ENCODE measurements at regions of chr19 and their contacts with region 1.

Region 1: GRCh38 chr19:47745010-47745901 is at the start of gene NOP53:
- DNase-seq: peak; percentile 83 to 98
- H3K4me3 ChIP-seq: peak within 1 kb of the TSS; percentile 67 to 79
- H3K27ac ChIP-seq: peak within 1 kb of the TSS; percentile 98 to 99
- H3K4me1 ChIP-seq: peaks cover 15 to 24% of the 10 kb centered on the region in 2 donors
- H3K27me3 ChIP-seq: no peaks in the 10 kb centered on the region
- CTCF ChIP-seq: no peak
- total RNA-seq, gene NOP53: 385 TPM

Region 2: DNA sequence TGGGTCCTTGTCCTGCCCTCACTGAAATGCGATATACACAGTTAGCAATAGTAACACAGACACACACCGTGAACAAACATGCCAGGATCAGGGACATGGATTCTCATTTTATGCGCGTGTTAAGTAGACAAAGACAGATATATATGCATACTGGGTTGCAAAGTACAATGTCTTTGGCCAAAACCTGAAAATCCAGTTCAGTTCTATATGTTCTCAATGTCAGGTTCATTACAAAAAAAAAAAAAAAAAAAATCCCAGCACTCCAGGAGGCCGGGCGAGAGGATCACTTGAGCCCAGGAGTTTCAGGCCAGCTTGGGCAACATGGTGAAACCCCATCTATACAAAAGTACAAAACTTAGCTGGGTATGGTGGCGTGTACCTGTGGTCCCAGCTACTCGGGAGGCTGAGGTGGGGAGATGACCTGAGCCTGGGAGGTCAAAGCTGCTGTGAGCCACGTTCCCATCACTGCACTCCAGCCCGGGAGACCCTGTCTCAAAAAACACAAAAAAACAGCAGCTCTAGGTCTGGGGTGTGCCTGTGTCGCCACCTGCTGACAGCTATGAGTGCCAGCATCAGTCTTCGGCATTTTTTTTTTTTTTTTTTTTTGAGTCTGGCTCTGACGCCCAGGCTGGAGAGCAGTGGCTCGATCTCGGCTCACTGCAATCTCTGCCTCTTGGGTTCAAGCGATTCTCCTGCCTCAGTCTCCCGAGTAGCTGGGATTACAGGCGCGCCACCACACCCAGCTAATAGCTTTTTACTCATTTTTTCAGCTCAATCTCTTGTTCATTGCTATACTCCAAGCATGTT is 904.9 kb before region 1 on chr19:
- intact Hi-C with region 1: no loop called
- DNase-seq: no peak
- H3K4me3 ChIP-seq: no peak overlapping the region
- H3K27ac ChIP-seq: peak overlapping the region; percentile 50 to 70
- H3K4me1 ChIP-seq: peaks cover 2 to 8% of the 10 kb centered on the region in 2 donors
- H3K27me3 ChIP-seq: no peaks in the 10 kb centered on the region
- CTCF ChIP-seq: peak; percentile 80 to 85 (median 82)

Region 3: GRCh38 chr19:47514869-47515588 is 230.2 kb before region 1 on chr19 and contains the start of gene NAPA:
- intact Hi-C with region 1: loop called (anchors 1 kb)
- DNase-seq: peak; percentile 100
- H3K4me3 ChIP-seq: peak within 1 kb of the TSS; percentile 84 to 85
- H3K27ac ChIP-seq: peak within 1 kb of the TSS; percentile 92 to 96
- H3K4me1 ChIP-seq: peaks cover 21 to 38% of the 10 kb centered on the region in 2 donors
- H3K27me3 ChIP-seq: no peaks in the 10 kb centered on the region
- CTCF ChIP-seq: no peak
- total RNA-seq, gene NAPA: 102 TPM

Region 4: GRCh38 chr19:47608074-47608918 is 137.0 kb before region 1 on chr19:
- intact Hi-C with region 1: loop called (anchors 1 kb)
- DNase-seq: peak; percentile 65 to 96
- H3K4me3 ChIP-seq: peak overlapping the region; percentile 84 to 97
- H3K27ac ChIP-seq: peak overlapping the region; percentile 94 to 97
- H3K4me1 ChIP-seq: peaks cover 9 to 38% of the 10 kb centered on the region in 2 donors
- H3K27me3 ChIP-seq: no peaks in the 10 kb centered on the region
- CTCF ChIP-seq: peak; percentile 22 to 55 (median 25)

Region 5: GRCh38 chr19:47713046-47714021 is 31.9 kb before region 1 on chr19 and contains the start of gene EHD2:
- intact Hi-C with region 1: loop called (anchors 1 kb)
- DNase-seq: peak in 1 of 2 donors; percentile 84
- H3K4me3 ChIP-seq: peak within 1 kb of the TSS; percentile 88 to 100
- H3K27ac ChIP-seq: peak within 1 kb of the TSS; percentile 87 to 98
- H3K4me1 ChIP-seq: peaks cover 3 to 42% of the 10 kb centered on the region in 2 donors
- H3K27me3 ChIP-seq: no peaks in the 10 kb centered on the region
- CTCF ChIP-seq: peak; percentile 97 to 98 (median 97)
- total RNA-seq, gene EHD2: 342 TPM

Region 6: GRCh38 chr19:47719047-47719859 is 26.0 kb before region 1 on chr19:
- intact Hi-C with region 1: loop called (anchors 1 kb)
- DNase-seq: peak; percentile 59 to 94
- H3K4me3 ChIP-seq: peak overlapping the region; percentile 10 to 61
- H3K27ac ChIP-seq: peak overlapping the region; percentile 90 to 98
- H3K4me1 ChIP-seq: peaks cover 14 to 71% of the 10 kb centered on the region in 2 donors
- H3K27me3 ChIP-seq: no peaks in the 10 kb centered on the region
- CTCF ChIP-seq: no peak

Region 7: GRCh38 chr19:47729992-47730889 is 15.0 kb before region 1 on chr19:
- intact Hi-C with region 1: loop called (anchors 1 kb)
- DNase-seq: peak in 1 of 2 donors; percentile 87
- H3K4me3 ChIP-seq: peak overlapping the region; percentile 43 to 54
- H3K27ac ChIP-seq: peak overlapping the region; percentile 89 to 95
- H3K4me1 ChIP-seq: peaks cover 6 to 26% of the 10 kb centered on the region in 2 donors
- H3K27me3 ChIP-seq: no peaks in the 10 kb centered on the region
- CTCF ChIP-seq: no peak

Region 8: DNA sequence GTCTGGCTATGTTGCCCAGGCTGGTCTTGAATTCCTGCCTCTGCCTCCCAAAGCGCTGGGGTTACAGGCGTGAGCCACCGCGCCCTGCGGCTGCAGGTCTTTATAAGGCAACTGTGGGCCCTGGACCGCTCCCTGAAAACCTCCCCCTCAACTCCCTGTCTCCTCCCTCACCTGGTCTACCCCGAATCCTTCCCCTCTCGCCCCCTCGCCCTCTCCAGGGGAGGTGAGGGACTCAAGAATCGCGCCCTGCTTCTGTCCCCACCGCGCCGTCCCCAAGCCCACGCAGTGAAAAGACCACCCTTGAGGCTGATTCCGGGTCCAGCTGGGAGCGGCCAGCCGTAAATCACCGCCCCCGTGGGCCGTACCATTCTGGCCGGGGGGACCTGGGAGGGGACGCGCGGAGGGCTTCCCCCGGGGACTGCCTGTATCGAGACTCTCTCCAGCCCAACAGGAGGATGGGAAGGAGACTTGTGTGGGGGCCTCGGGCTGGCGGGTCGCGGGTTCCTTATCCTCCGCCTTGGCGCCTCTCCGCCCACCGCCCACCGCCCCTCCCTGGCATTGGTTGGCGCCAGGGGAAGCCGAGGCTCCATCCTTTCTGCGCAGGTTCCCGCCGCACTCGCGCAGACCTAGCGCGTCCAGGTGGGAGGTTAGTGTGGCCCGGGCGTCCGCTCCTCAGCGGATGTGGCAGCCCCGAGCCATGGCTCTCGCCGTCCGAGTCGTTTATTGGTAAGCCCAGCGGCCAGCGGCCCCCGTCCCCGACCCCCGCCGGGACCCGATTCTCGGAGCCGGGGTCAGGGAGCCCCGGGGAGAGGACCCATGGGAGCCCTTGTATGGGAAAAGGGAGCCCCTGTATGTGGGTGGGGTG is 33.1 kb after region 1 on chr19 and contains the start of gene SELENOW:
- intact Hi-C with region 1: loop called (anchors 2 kb)
- DNase-seq: peak in 1 of 2 donors; percentile 76
- H3K4me3 ChIP-seq: peak within 1 kb of the TSS; percentile 81 to 94
- H3K27ac ChIP-seq: peak within 1 kb of the TSS; percentile 97 to 98
- H3K4me1 ChIP-seq: peaks cover 18 to 30% of the 10 kb centered on the region in 2 donors
- H3K27me3 ChIP-seq: no peaks in the 10 kb centered on the region
- CTCF ChIP-seq: no peak
- total RNA-seq, gene SELENOW: 771 TPM